ENCODE measurements at regions of chr16 and their contacts with region 1.

Region 1: DNA sequence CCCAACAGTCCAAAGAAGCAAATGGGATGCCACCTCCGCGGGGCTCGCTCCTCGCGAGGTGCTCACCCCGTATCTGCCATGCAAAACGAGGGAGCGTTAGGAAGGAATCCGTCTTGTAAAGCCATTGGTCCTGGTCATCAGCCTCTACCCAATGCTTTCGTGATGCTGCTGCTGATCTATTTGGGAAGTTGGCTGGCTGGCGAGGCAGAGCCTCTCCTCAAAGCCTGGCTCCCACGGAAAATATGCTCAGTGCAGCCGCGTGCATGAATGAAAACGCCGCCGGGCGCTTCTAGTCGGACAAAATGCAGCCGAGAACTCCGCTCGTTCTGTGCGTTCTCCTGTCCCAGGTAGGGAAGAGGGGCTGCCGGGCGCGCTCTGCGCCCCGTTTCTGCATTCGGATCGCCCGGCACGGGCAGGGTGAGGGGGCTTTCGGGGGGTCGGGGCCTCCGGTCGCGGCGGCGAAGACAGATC is at the start of gene CDH13:
- DNase-seq: no peak
- ATAC-seq: no peak
- H3K4me3 ChIP-seq: no peak within 1 kb of the TSS
- H3K4me3 Mint-ChIP-seq: no peak within 1 kb of the TSS
- H3K27ac ChIP-seq: no peak within 1 kb of the TSS
- H3K27ac Mint-ChIP-seq: no peak within 1 kb of the TSS
- H3K4me1 ChIP-seq: peaks cover 14% of the 10 kb centered on the region
- H3K4me1 Mint-ChIP-seq: no peaks in the 10 kb centered on the region
- H3K27me3 ChIP-seq: peaks cover 49 to 54% of the 10 kb centered on the region in 2 experiments
- H3K27me3 Mint-ChIP-seq: peaks cover 83% of the 10 kb centered on the region
- CTCF ChIP-seq: no peak
- total RNA-seq, gene CDH13: not detected

Region 2: DNA sequence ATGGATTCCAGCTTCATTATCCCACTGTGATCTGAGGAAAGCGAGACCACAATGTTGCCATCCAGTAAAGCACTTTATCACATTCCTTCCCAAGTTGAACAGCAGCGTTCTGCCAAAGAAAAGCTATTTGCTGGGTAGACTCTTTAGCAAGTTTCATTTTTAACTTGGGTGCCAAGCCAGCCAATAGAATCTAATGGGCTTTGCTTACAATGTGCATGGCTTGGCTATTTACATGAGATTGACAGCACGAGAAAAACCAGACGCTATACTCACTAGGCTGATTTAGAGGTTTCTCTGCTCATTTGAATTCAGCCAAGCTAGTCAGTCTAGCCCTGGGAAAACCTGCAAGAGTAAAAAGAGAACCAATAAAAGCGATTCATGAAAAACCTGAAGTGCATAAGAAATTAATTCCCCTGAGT is 108.9 kb after region 1 on chr16:
- CTCF ChIA-PET with region 1: no interaction called
- POLR2A ChIA-PET with region 1: no interaction called
- intact Hi-C with region 1: no loop called
- DNase-seq: no peak
- ATAC-seq: no peak
- H3K4me3 ChIP-seq: no peak overlapping the region
- H3K4me3 Mint-ChIP-seq: no peak overlapping the region
- H3K27ac ChIP-seq: no peak overlapping the region
- H3K27ac Mint-ChIP-seq: no peak overlapping the region
- H3K4me1 ChIP-seq: no peaks in the 10 kb centered on the region
- H3K4me1 Mint-ChIP-seq: no peaks in the 10 kb centered on the region
- H3K27me3 ChIP-seq: no peaks in the 10 kb centered on the region
- H3K27me3 Mint-ChIP-seq: peaks cover 15% of the 10 kb centered on the region
- CTCF ChIP-seq: no peak

Region 3: DNA sequence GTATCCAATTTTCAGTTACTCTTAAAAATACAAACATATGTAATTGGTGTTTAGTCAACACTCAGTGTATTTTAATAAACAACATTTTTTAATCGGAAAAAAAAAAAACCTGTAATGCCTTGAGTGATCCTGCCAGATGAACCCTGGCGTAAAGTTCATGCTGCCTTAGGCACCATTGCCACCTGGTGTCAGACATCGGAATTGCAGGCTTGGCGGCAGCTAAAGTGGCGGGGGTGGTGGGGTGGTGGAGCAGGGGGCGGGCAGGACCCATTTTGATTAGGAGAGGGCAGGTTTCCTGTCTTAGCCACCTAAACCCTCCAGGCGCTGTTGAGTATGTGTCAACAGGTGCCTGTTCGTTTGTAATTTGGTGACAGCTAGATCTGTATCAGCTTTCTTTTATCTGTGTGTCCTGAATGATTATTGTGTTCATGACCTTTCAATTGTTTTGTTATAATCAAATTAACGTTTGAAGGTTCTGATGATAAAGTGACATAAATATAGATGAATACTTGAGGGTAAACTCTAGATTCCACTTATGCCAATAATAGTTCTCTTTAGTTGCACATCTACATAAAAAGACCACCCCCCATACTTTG is 588.7 kb after region 1 on chr16:
- CTCF ChIA-PET with region 1: no interaction called
- POLR2A ChIA-PET with region 1: no interaction called
- intact Hi-C with region 1: loop called (anchors 5 to 10 kb)
- DNase-seq: peak in 13 of 14 experiments; percentile 2 to 51 (median 20)
- ATAC-seq: no peak
- H3K4me3 ChIP-seq: no peak overlapping the region
- H3K4me3 Mint-ChIP-seq: no peak overlapping the region
- H3K27ac ChIP-seq: no peak overlapping the region
- H3K27ac Mint-ChIP-seq: no peak overlapping the region
- H3K4me1 ChIP-seq: no peaks in the 10 kb centered on the region
- H3K4me1 Mint-ChIP-seq: no peaks in the 10 kb centered on the region
- H3K27me3 ChIP-seq: no peaks in the 10 kb centered on the region
- H3K27me3 Mint-ChIP-seq: no peaks in the 10 kb centered on the region
- CTCF ChIP-seq: peak; percentile 53